ENCODE measurements at regions of chr1 and their contacts with region 1.

Region 1: DNA sequence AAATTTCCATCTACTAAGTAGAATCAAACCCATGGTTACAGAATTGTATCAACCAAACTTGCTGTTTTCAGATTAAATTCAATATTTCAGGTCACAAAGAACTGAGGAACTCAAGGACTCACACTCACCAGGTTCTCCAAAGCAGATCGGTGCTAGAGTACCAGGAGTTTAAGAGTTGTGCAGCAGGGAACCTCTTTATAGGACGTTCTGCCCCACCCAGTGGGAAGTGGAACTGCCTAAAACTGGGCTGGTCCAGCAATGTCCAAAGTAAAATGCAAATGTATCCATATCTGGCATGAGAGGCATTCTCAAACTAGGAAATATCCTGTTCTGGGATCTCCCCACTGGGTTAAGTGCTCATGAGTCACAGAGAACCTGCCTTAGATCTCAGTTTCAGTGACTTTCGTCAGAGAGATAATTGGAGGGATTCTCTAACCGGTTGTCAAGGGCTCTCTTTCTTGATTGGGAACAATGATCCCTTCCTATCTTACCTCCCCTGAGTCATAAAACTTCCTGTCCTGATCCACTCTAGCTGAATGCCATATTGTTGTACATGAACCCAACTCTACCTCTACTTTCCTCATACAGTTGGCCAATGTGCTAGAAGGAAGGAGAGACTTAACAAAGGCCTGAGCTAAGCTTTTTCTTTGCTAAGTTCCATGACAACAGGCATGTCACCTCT is at the start of gene SPRR2D:
- DNase-seq: no peak
- ATAC-seq: no peak
- H3K4me3 ChIP-seq: no peak within 1 kb of the TSS
- H3K27ac ChIP-seq: no peak within 1 kb of the TSS
- H3K4me1 ChIP-seq: no peaks in the 10 kb centered on the region
- H3K27me3 ChIP-seq: peaks cover 0 to 3% (median 0%) of the 10 kb centered on the region in 4 donors
- CTCF ChIP-seq: no peak
- total RNA-seq, gene SPRR2D: not detected

Region 2: DNA sequence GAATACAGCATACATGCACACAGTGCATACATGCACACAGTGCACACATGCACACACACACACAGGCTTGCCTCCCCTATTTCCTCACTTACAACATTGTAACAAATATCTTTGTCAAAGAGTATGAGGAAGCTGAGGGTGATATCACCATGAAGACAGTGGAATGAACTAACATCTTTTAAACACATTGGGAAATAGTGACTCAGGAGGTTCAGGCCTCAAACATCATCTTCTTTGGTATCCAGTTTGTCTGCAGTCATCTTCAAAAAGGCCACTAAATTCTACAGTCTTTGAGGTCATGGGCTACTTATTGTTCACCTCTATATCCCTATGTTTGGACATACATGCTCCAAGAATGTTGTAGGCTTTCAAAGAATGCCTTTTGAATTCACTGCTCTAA is 357.2 kb before region 1 on chr1:
- intact Hi-C with region 1: no loop called
- DNase-seq: no peak
- ATAC-seq: no peak
- H3K4me3 ChIP-seq: no peak overlapping the region
- H3K27ac ChIP-seq: no peak overlapping the region
- H3K4me1 ChIP-seq: no peaks in the 10 kb centered on the region
- H3K27me3 ChIP-seq: no peaks in the 10 kb centered on the region
- CTCF ChIP-seq: no peak

Region 3: DNA sequence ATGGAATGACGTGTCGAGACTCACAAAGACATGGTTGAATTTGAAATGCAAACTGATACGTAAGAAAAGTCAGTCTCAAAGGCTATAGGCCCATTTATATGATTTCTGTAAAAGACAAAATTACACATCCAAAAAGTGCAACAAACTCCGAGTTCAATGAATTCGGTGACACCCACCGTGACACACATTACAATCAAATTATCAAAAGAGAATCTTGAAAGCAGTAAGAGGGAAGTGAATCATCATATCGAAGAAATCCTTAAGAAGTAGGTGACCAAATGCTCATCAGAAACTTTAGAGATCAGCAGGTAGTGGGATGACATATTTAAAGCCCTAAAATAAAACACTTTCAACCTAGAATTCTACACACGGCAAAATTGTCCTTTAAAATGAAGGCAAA is 58.6 kb after region 1 on chr1:
- intact Hi-C with region 1: loop called in 1 of 3 experiments (anchors 10 kb)
- DNase-seq: no peak
- ATAC-seq: no peak
- H3K4me3 ChIP-seq: no peak overlapping the region
- H3K27ac ChIP-seq: no peak overlapping the region
- H3K4me1 ChIP-seq: no peaks in the 10 kb centered on the region
- H3K27me3 ChIP-seq: peaks cover 0 to 2% (median 0%) of the 10 kb centered on the region in 4 donors
- CTCF ChIP-seq: no peak